ENCODE measurements at regions of chr13 and their contacts with region 1.

Region 1: GRCh38 chr13:59766233-59766632 is 397.5 kb downstream of the DIAPH3 start:
- DNase-seq: no peak
- H3K4me3 ChIP-seq: no peak overlapping the region
- H3K27ac ChIP-seq: no peak overlapping the region
- H3K4me1 ChIP-seq: peaks cover 0 to 11% (median 2%) of the 10 kb centered on the region in 4 donors
- H3K27me3 ChIP-seq: no peaks in the 10 kb centered on the region
- CTCF ChIP-seq: no peak
- EP300 ChIP-seq: no peak
- POLR2A ChIP-seq: no peak

Region 2: GRCh38 chr13:59494560-59494970 is 271.7 kb before region 1 on chr13:
- intact Hi-C with region 1: no loop called
- DNase-seq: peak in 1 of 2 donors; percentile 62
- H3K4me3 ChIP-seq: no peak overlapping the region
- H3K27ac ChIP-seq: no peak overlapping the region
- H3K4me1 ChIP-seq: peaks cover 0 to 17% (median 7%) of the 10 kb centered on the region in 4 donors
- H3K27me3 ChIP-seq: no peaks in the 10 kb centered on the region
- CTCF ChIP-seq: no peak
- EP300 ChIP-seq: no peak
- POLR2A ChIP-seq: no peak

Region 3: GRCh38 chr13:59680429-59681024 is 85.7 kb before region 1 on chr13:
- intact Hi-C with region 1: loop called (anchors 10 kb)
- DNase-seq: peak in 1 of 2 donors; percentile 44
- H3K4me3 ChIP-seq: no peak overlapping the region
- H3K27ac ChIP-seq: no peak overlapping the region
- H3K4me1 ChIP-seq: peaks cover 0 to 9% (median 3%) of the 10 kb centered on the region in 4 donors
- H3K27me3 ChIP-seq: no peaks in the 10 kb centered on the region
- CTCF ChIP-seq: peak in 5 of 7 experiments; percentile 36 to 71 (median 63)
- EP300 ChIP-seq: no peak
- POLR2A ChIP-seq: no peak